Caco-2 (cell line): ENCODE measurements at regions of chr22 and their contacts with region 1.

Region 1: DNA sequence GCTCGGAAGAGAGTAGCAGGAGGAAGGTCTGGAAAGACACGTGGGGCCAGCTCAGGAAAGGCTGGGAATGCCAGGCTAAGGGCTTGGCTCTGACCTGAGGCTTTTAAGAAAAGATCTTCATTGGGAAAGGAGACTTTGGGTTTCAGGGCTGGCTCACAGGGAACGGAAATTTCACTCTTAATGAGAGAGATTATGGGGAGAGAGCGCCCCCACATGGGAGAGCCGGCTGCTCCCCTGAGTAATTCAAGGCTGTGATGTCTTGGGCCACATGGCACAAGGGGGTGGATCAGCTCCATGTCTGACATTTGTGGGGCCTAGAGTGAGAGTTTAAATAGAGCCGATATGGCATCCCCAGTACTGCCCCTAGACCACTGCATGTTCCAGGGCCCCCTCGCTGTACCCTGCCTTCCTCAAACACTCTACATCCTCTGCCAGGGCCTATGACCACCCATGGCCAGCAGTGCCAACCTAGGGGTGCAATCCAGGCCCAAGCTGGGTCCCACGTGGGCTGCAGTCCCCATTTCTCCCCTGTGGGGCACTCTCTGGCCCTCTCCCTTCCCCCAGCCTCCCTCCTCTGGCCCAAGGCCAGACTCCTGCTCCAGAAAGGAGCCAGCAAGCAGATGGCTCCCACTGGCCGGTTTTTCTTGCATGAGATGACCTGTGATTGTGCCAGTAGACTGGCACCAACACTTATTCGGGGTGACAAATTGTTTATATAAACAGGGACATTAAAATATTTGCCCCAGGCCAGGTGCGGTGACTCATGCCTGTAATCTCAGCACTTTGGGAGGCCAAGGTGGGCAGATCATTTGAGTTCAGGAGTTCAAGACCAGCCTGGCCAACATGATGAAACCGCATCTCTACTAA is 75.2 kb downstream of the ISX start:
- DNase-seq: peak in 1 of 2 experiments; percentile 37
- H3K4me3 ChIP-seq: no peak overlapping the region
- H3K4me3 Mint-ChIP-seq: no peak overlapping the region
- H3K27ac Mint-ChIP-seq: no peak overlapping the region
- H3K4me1 ChIP-seq: no peaks in the 10 kb centered on the region
- H3K4me1 Mint-ChIP-seq: no peaks in the 10 kb centered on the region
- H3K27me3 ChIP-seq: no peaks in the 10 kb centered on the region
- H3K27me3 Mint-ChIP-seq: peaks cover 3% of the 10 kb centered on the region
- CTCF ChIP-seq: peak in 1 of 2 experiments; percentile 39

Region 2: DNA sequence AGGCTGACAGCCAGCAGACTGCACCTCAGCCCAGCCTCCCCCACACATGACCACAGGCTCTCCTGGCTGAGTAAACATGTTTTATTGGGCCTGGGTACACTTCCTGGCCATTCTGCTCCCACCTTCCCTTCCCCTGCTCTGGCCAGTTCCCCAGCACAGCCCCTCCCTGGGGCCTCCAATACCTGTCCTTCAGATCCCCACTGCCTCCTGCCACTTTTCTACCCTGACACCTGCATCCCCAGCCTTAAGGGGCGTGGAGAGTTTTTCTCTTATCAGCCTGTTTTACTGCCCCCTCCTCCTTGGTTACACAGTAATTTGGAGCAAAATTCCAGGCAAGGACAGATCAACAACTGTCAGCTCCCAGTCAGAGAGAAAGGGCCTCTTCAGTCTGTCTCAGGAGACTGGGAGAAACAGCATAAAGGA is 75.3 kb before region 1 on chr22 and contains the start of gene ISX:
- CTCF ChIA-PET with region 1: no interaction called
- POLR2A ChIA-PET with region 1: no interaction called
- intact Hi-C with region 1: loop called (anchors 1 kb)
- DNase-seq: peak; percentile 93 to 96
- H3K4me3 ChIP-seq: peak within 1 kb of the TSS; percentile 28
- H3K4me3 Mint-ChIP-seq: peak within 1 kb of the TSS; percentile 78
- H3K27ac Mint-ChIP-seq: peak within 1 kb of the TSS; percentile 100
- H3K4me1 ChIP-seq: peaks cover 33% of the 10 kb centered on the region
- H3K4me1 Mint-ChIP-seq: peaks cover 44% of the 10 kb centered on the region
- H3K27me3 ChIP-seq: no peaks in the 10 kb centered on the region
- H3K27me3 Mint-ChIP-seq: no peaks in the 10 kb centered on the region
- CTCF ChIP-seq: no peak
- total RNA-seq, gene ISX: 4.7 and 5.6 TPM in 2 replicates

Region 3: GRCh38 chr22:35128637-35129036 is 12.5 kb before region 1 on chr22:
- CTCF ChIA-PET with region 1: no interaction called
- POLR2A ChIA-PET with region 1: no interaction called
- intact Hi-C with region 1: no loop called
- DNase-seq: no peak
- H3K4me3 ChIP-seq: no peak overlapping the region
- H3K4me3 Mint-ChIP-seq: no peak overlapping the region
- H3K27ac Mint-ChIP-seq: no peak overlapping the region
- H3K4me1 ChIP-seq: no peaks in the 10 kb centered on the region
- H3K4me1 Mint-ChIP-seq: no peaks in the 10 kb centered on the region
- H3K27me3 ChIP-seq: no peaks in the 10 kb centered on the region; the same call in 1 of the 2 replicates
- H3K27me3 Mint-ChIP-seq: peaks cover 9% of the 10 kb centered on the region
- CTCF ChIP-seq: no peak